ENCODE measurements at regions of chr2 and their contacts with region 1.

Region 1: DNA sequence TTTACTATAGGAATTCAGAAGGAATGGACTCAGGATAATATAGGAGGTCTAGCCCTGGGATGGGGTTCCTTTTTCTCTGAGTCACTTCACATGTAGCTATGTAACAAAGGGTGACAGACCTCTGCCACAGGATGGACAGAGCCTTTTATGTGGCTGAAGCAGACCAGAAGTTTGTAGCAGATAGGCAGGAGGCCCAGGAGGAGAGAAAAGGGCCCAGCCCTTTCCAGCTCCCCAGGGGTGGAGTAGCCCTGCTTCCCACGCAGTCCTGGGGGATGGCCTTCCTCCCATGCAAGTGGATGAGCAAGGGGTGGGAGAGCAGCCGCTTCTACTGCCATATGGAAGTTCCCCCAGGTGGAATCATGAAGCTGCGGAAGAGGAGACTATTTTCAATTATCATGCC is 40.3 kb downstream of the ARMC9 start:
- DNase-seq: no peak

Region 2: GRCh38 chr2:231297108-231297908 is 58.6 kb after region 1 on chr2:
- intact Hi-C with region 1: loop called (anchors 10 kb)
- DNase-seq: peak; percentile 68 to 92 (median 82)

Region 3: DNA sequence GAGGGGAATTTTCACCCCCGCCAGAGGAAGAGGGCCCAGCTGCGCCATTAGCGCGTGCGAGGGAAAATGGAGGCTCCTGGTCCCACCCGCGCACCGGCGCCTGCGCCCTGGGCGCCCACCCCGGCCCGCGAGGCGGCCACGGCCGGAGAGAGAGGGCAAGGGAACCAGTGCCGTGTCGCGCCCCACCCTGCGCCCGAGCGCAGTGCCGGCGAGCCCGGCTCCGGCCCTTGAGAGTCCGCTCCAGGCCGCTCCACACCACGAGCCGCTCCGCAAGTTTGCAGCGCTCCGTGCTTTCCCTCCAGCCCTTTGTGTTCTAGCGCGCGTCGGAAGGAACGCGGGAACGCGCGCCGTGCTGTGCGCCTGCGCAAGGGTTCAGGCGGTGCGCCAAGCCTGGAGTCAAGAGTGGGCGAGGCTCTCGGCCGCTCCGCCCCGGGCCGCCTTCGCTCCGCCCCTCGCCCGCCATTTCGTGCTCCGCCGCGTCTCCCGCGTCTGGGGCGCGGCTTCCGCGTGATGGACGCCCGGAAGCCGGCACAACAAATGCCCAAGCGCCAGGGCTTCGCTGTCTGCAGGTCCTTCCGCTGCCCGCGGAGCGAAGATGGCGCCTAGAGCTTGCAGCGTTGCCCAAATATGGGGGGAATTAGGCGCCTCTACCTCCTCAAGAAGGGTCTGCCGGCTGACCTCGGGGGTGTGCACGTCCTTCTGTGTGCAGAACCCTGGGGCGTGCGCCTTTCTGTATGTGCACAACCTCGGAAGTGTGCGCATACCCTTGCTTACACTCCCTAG is 423.5 kb after region 1 on chr2:
- intact Hi-C with region 1: no loop called
- DNase-seq: peak; percentile 83 to 99 (median 96)

Measured in head of caudate nucleus (tissue), 42 donors.